Activated CD4-positive, alpha-beta memory T cell treated with anti-CD3 and anti-CD28 coated beads, Interleukin-2, amount 10 ng/mL, durations not matched to agents 7 days and 5 days (primary cell): ENCODE measurements at regions of chr1 and their contacts with region 1.

Region 1: DNA sequence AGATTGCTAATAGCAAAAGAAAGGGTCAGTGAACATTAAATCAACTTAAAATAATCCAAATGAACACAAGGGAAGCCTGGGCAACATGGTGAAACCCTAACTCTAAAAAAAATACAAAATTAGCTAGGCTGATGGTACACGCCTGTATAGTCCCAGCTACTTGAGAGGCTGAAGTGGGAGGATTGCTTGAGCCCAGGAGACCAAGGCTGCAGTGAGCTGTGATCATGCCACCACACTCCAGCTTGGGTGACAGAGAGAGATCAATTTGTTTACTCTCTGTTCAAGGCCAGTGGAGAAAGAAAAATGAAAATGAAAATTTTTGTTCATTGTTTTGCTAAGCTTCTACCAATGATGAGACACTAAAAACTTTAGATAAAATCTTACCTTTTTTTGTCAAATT is 24.8 kb downstream of the WDR47 start:
- DNase-seq: no peak
- H3K4me3 Mint-ChIP-seq: no peak overlapping the region
- H3K27ac Mint-ChIP-seq: no peak overlapping the region
- H3K4me1 Mint-ChIP-seq: no peaks in the 10 kb centered on the region
- H3K27me3 Mint-ChIP-seq: no peaks in the 10 kb centered on the region

Region 2: DNA sequence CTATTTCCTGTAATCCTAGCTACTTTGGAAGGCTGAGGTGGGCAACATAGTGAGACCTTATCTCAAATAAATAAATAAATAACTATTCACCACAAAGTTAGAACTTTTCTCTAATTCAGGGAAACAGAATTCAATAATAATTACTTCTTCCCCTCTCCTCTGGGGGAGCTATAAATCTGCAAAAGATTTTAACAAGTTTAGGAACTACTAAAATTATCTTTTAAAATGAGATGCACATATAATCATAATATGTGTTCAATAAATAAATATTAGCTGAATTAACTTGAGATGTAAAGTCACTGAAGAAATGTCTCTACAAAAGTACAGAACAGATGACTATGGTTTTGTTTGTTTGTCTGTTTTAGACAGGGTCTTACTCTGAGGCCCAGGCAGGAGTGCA is 10.7 kb after region 1 on chr1:
- CTCF ChIA-PET with region 1: interaction called, 10 read pairs
- POLR2A ChIA-PET with region 1: no interaction called
- DNase-seq: no peak
- H3K4me3 Mint-ChIP-seq: no peak overlapping the region
- H3K27ac Mint-ChIP-seq: no peak overlapping the region
- H3K4me1 Mint-ChIP-seq: peaks cover 2% of the 10 kb centered on the region
- H3K27me3 Mint-ChIP-seq: no peaks in the 10 kb centered on the region

Region 3: DNA sequence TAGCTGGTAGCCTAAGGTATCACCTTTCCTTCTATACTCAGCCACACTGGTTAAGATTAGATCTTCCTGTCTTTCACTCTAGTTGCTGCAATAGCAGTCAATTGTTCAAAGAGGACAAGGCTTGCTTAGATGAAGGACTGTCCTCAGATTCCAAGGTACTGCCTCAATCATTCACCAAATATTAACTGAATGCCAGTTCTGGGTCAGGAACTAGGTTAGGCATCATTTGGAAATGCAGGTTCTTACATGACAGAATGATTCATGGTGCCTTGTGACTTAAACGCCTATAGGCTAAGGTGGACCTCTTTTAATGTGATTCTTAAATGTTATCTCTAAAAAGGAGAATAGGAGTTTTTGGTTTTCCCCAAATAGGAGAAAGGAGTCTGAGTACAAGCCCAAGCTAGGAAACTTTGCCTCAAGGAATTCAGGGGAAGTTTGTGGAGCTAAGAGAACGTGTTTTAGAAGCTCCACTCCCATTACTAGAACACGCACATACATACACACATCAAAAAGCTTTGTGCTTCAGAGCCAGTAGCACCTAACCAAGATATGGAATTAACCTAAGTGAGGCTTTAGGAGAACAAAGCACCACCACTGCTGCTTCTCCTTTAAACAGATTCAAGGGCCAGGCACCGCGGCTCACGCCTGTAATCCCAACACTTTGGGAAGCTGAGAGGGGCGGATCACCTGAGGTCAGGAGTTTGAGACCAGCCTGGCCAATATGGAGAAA is 33.3 kb after region 1 on chr1:
- CTCF ChIA-PET with region 1: no interaction called
- POLR2A ChIA-PET with region 1: no interaction called
- DNase-seq: no peak
- H3K4me3 Mint-ChIP-seq: no peak overlapping the region
- H3K27ac Mint-ChIP-seq: no peak overlapping the region
- H3K4me1 Mint-ChIP-seq: peaks cover 2% of the 10 kb centered on the region
- H3K27me3 Mint-ChIP-seq: peaks cover 1% of the 10 kb centered on the region